ENCODE measurements at regions of chr22 and their contacts with region 1.

Region 1: GRCh38 chr22:43136255-43136654 is 6.9 kb downstream of the MCAT start:
- DNase-seq: peak in 4 of 5 donors; percentile 40 to 71 (median 62)
- ATAC-seq: peak; percentile 39 to 67 (median 63)
- H3K4me3 ChIP-seq: no peak overlapping the region
- H3K27ac ChIP-seq: peak overlapping the region in 7 of 12 donors; percentile 10 to 55 (median 22)
- H3K4me1 ChIP-seq: peaks cover 0 to 35% (median 19%) of the 10 kb centered on the region in 12 donors
- H3K27me3 ChIP-seq: no peaks in the 10 kb centered on the region
- CTCF ChIP-seq: peak; percentile 40 to 71 (median 63)
- POLR2A ChIP-seq: no peak

Region 2: GRCh38 chr22:43042101-43042780 is 94.0 kb before region 1 on chr22:
- intact Hi-C with region 1: no loop called
- DNase-seq: no peak
- ATAC-seq: no peak
- H3K4me3 ChIP-seq: no peak overlapping the region
- H3K27ac ChIP-seq: no peak overlapping the region
- H3K4me1 ChIP-seq: no peaks in the 10 kb centered on the region
- H3K27me3 ChIP-seq: no peaks in the 10 kb centered on the region
- CTCF ChIP-seq: no peak
- POLR2A ChIP-seq: no peak

Region 3: GRCh38 chr22:43077121-43077877 is 59.0 kb before region 1 on chr22:
- intact Hi-C with region 1: loop called in 1 of 10 experiments (anchors 10 kb)
- DNase-seq: peak in 4 of 5 donors; percentile 51 to 69 (median 55)
- ATAC-seq: peak; percentile 79 to 90 (median 86)
- H3K4me3 ChIP-seq: no peak overlapping the region
- H3K27ac ChIP-seq: peak overlapping the region in 4 of 12 donors; percentile 15 to 45 (median 36)
- H3K4me1 ChIP-seq: peaks cover 0 to 11% (median 0%) of the 10 kb centered on the region in 12 donors
- H3K27me3 ChIP-seq: no peaks in the 10 kb centered on the region
- CTCF ChIP-seq: no peak
- POLR2A ChIP-seq: no peak

Measured in heart left ventricle (tissue), 16 donors.